K562 (cell line): ENCODE measurements at regions of chr7 and their contacts with region 1.

Region 1: GRCh38 chr7:140696680-140697446 is at the start of gene NDUFB2:
- DNase-seq: peak; percentile 89 to 92 (median 91)
- ATAC-seq: peak; percentile 94
- H3K4me3 ChIP-seq: peak within 1 kb of the TSS; percentile 86
- H3K27ac ChIP-seq: peak within 1 kb of the TSS; percentile 85
- H3K4me1 ChIP-seq: peaks cover 18 to 33% of the 10 kb centered on the region in 2 experiments; a peak in 3 of 5 replicates
- H3K27me3 ChIP-seq: no peaks in the 10 kb centered on the region; a peak in 1 of 5 replicates
- CTCF ChIP-seq: peak in 1 of 3 experiments; percentile 2; a peak in 1 of 6 replicates
- EP300 ChIP-seq: no peak
- POLR2A ChIP-seq: peak; percentile 99
- RAD21 ChIP-seq: no peak
- polyA plus RNA-seq, gene NDUFB2: 1,937 to 2,075 TPM

Region 2: DNA sequence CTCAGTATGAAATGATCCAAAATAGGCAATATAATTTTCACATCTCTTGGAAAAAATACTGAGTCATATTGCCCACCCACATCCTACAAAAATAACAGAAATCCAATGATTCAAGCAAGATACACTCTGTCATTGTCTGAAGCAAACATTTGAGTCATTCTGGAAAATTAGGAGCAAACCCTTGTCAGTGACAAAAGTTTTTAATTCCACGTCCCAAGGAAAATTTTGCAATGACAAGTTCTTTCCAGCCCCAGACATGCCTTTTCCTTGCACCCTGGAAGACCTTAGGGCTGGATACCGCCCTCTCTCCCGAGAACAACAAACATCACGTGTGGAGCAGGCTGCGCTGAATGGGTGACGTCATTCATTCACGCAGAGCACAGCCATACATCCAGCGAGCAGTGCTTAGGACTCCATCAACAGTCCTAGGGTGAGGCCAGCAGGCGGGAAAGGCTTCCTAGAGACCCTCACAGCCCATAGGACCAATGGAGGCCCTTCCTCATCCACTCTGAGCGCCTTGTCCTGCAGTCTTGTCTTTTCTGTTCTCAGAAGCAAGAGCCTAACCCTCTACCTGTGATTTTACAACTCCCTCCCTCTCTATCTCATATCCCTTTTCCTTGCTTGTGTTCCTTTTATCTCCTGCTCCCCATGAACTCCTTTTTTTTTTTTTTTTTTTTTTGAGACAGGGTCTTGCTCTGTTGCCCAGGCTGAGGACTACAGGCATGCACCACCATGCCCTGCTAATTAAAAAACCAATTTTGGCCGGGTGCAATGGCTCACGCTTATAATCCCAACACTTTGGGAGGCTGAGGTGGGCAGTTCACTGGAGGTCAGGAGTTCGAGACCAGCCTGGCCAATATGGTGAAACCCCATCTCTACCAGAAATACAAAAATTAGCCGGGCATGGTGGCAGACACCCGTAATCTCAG is 496.5 kb before region 1 on chr7:
- CTCF ChIA-PET with region 1: no interaction called
- POLR2A ChIA-PET with region 1: no interaction called
- in situ Hi-C with region 1: no loop called
- intact Hi-C with region 1: no loop called
- DNase-seq: peak; percentile 77 to 90 (median 85)
- ATAC-seq: peak; percentile 98
- H3K4me3 ChIP-seq: peak overlapping the region; percentile 1; the same call in 1 of the 2 replicates
- H3K27ac ChIP-seq: no peak overlapping the region
- H3K4me1 ChIP-seq: peaks cover 11 to 18% of the 10 kb centered on the region in 2 experiments; a peak in 3 of 5 replicates
- H3K27me3 ChIP-seq: no peaks in the 10 kb centered on the region
- CTCF ChIP-seq: no peak
- EP300 ChIP-seq: peak; percentile 25; the same call in 1 of the 2 replicates
- POLR2A ChIP-seq: no peak
- RAD21 ChIP-seq: peak; percentile 5 to 29; a peak in 2 of 4 replicates

Region 3: DNA sequence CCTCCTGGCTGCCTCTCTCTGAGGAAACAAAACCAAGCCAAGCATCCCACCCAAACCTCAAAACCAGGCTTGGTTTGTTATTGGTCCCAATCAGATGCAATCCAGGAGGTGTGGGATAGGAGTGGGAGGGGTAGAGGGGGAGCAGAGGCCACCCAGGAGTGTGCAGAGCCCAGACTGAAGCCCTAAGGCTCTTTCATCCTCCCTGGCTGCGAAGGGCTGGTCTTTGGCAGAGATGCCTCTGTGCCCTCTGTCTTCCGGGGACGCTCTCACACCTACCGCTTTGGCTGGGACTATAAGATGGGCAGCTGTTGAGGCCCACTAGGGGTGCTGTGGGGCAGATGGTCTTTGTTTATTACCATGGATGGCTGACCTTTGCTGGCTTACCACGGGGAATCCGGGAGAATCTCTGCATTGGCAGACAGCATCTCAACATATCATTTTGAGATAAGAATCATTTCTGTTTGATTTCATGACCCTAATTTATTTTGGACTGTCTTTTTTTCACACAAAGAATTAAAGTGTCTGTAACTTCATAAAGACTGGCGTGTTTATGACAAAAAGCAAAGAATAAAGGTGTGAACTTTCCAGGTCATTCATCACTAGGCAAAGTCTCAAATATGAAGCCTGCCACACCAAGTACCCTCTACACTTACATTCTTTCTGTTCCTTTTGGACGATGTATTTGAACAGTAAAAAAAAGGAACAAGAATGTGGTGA is 49.8 kb before region 1 on chr7:
- CTCF ChIA-PET with region 1: no interaction called
- POLR2A ChIA-PET with region 1: no interaction called
- in situ Hi-C with region 1: no loop called
- intact Hi-C with region 1: no loop called
- DNase-seq: peak; percentile 65 to 78 (median 77)
- ATAC-seq: peak; percentile 91
- H3K4me3 ChIP-seq: no peak overlapping the region
- H3K27ac ChIP-seq: no peak overlapping the region
- H3K4me1 ChIP-seq: no peaks in the 10 kb centered on the region; a peak in 1 of 5 replicates
- H3K27me3 ChIP-seq: peaks cover 33 to 82% of the 10 kb centered on the region in 2 experiments
- CTCF ChIP-seq: peak; percentile 83 to 91 (median 86)
- EP300 ChIP-seq: no peak
- POLR2A ChIP-seq: no peak
- RAD21 ChIP-seq: peak in 1 of 2 experiments; percentile 38; a peak in 2 of 4 replicates

Region 4: GRCh38 chr7:141014524-141015395 is 317.9 kb after region 1 on chr7 and contains the start of gene MRPS33:
- CTCF ChIA-PET with region 1: no interaction called
- POLR2A ChIA-PET with region 1: interaction called, 3 read pairs
- in situ Hi-C with region 1: no loop called
- intact Hi-C with region 1: loop called (anchors 5 kb)
- DNase-seq: peak; percentile 99
- ATAC-seq: peak; percentile 99
- H3K4me3 ChIP-seq: peak within 1 kb of the TSS; percentile 53
- H3K27ac ChIP-seq: peak within 1 kb of the TSS; percentile 80
- H3K4me1 ChIP-seq: peaks cover 8 to 21% of the 10 kb centered on the region in 2 experiments; a peak in 2 of 5 replicates
- H3K27me3 ChIP-seq: peaks cover 0 to 2% of the 10 kb centered on the region in 2 experiments; a peak in 1 of 5 replicates
- CTCF ChIP-seq: peak; percentile 92 to 96 (median 96)
- EP300 ChIP-seq: peak; percentile 72
- POLR2A ChIP-seq: peak; percentile 99
- RAD21 ChIP-seq: peak in 1 of 2 experiments; percentile 24; a peak in 1 of 4 replicates
- polyA plus RNA-seq, gene MRPS33: 395 to 442 TPM

Region 5: DNA sequence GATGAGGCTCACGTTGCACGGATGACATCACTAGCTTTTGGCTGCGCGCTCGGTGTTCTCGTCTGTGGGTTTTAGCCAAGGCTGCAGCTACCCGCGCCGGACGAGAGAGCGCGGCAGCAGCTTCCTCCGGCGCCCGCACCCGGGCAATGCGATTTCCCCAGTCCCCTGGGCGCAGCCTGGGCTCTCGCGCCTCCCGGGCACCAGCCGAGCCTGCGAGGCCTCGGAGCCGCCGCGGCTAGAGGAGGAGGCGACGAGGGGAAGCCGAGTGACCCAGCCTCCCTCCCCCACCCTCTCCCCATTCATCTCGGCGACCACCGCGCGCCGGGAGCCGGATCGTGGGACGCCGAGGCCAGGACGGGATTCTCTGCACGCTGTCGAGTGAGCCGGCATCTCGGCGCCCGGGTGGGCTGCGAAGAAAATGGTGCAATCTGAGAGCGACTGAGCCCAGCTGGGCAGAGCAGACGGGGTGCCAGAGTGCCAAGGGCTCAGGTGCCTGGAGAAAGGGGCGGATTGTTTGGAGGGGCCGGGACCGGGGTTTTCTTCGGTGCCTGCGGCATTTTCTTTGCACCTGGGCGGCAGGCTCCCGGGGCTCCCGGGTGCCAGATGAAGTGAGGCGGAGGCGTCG is 375.8 kb after region 1 on chr7:
- CTCF ChIA-PET with region 1: no interaction called
- POLR2A ChIA-PET with region 1: no interaction called
- in situ Hi-C with region 1: no loop called
- intact Hi-C with region 1: no loop called
- DNase-seq: no peak
- ATAC-seq: 0 out of 3 replicates have a peak, but pooled peaks have one; percentile 16
- H3K4me3 ChIP-seq: no peak overlapping the region
- H3K27ac ChIP-seq: no peak overlapping the region
- H3K4me1 ChIP-seq: peaks cover 0 to 31% of the 10 kb centered on the region in 2 experiments; a peak in 2 of 5 replicates
- H3K27me3 ChIP-seq: peaks cover 50 to 56% of the 10 kb centered on the region in 2 experiments
- CTCF ChIP-seq: no peak
- EP300 ChIP-seq: no peak
- POLR2A ChIP-seq: no peak
- RAD21 ChIP-seq: no peak

Region 6: GRCh38 chr7:142077762-142078161 is 1380.9 kb after region 1 on chr7:
- CTCF ChIA-PET with region 1: no interaction called
- POLR2A ChIA-PET with region 1: no interaction called
- in situ Hi-C with region 1: no loop called
- intact Hi-C with region 1: no loop called
- DNase-seq: no peak
- ATAC-seq: no peak
- H3K4me3 ChIP-seq: no peak overlapping the region
- H3K27ac ChIP-seq: no peak overlapping the region
- H3K4me1 ChIP-seq: no peaks in the 10 kb centered on the region
- H3K27me3 ChIP-seq: no peaks in the 10 kb centered on the region
- CTCF ChIP-seq: no peak
- EP300 ChIP-seq: no peak
- POLR2A ChIP-seq: no peak
- RAD21 ChIP-seq: no peak